WTC11 (cell line): ENCODE measurements at regions of chr20 and their contacts with region 1.

Region 1: GRCh38 chr20:57498425-57499400 is 26.2 kb downstream of the CTCFL start:
- DNase-seq: peak; percentile 54
- ATAC-seq: peak; percentile 92
- H3K4me3 Mint-ChIP-seq: peak overlapping the region; percentile 26; the same call in 1 of the 2 replicates
- H3K27ac Mint-ChIP-seq: no peak overlapping the region
- H3K4me1 Mint-ChIP-seq: peaks cover 35% of the 10 kb centered on the region
- H3K27me3 Mint-ChIP-seq: no peaks in the 10 kb centered on the region
- CTCF ChIP-seq: no peak

Region 2: DNA sequence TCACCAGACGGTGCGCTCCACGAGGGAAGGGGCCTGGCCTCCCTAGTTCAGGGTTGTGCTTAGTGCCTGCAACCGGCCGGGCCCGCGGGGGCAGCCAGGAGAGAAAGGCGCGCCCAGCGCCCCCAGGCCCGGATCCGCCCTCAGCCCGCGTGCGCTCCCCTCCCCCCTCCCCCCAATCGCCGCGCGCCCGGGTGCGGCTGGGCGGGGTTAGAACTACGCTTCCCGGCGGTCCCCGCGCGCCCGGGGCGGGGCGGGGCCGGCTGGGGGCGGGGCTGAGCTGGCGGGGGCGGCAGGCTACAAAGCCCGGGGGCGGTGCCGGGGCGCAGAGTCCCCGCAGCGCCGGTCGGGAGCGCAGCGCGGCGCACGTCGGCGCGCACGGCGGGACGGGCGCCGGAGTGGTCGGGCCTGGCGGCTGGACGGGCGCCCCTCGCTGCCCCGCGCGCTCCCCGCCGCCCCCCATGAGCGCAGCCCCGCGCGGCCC is 107.6 kb before region 1 on chr20 and contains the start of gene RBM38:
- CTCF ChIA-PET with region 1: interaction called, 16 read pairs
- POLR2A ChIA-PET with region 1: no interaction called
- DNase-seq: peak; percentile 78
- ATAC-seq: peak; percentile 63
- H3K4me3 Mint-ChIP-seq: peak within 1 kb of the TSS; percentile 84
- H3K27ac Mint-ChIP-seq: peak within 1 kb of the TSS; percentile 94
- H3K4me1 Mint-ChIP-seq: peaks cover 38% of the 10 kb centered on the region
- H3K27me3 Mint-ChIP-seq: no peaks in the 10 kb centered on the region
- CTCF ChIP-seq: no peak
- total RNA-seq, gene RBM38: 60.5 to 69.0 TPM (median 61.1 TPM) in 3 replicates

Region 3: DNA sequence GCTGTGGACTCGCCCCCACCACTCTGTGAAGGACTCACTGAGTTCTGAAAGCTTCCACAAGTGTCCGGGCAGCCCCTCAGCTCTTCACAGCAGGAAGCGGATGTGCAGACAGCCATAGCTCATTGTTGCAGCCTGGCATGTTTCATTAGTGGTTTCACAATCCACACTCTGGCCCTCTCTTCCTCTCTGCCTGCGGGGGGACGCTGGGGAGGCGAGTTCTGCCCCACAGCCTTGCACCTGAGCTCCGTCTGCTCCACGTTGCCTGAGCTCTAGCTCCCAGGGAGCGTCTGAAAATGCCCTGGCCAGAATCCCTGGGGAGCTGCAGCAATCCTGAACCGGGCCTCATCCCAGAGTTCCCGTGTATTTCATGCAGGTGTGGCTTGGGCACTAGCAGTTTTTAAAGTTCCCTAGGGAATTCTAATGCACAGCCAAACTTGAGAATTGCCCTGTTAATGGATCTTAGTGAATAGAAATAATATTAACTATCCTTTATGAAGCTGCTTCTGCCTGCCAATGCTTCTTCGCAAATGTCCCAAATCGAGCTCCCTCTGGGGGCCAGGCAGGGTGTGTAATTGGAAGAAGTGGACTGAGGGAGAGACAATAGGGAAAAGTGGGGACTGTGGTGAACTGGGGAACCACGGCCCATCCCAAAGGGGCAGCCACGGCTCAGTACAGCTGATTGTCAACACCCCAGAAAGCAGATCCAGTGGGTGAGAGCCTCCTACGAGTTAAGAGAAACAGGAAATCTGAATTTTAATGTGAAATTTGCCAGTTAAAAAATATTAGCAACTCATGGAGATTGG is 25.3 kb before region 1 on chr20:
- CTCF ChIA-PET with region 1: interaction called, 13 read pairs
- POLR2A ChIA-PET with region 1: no interaction called
- DNase-seq: peak; percentile 21
- ATAC-seq: peak; percentile 26
- H3K4me3 Mint-ChIP-seq: no peak overlapping the region
- H3K27ac Mint-ChIP-seq: no peak overlapping the region
- H3K4me1 Mint-ChIP-seq: peaks cover 42% of the 10 kb centered on the region
- H3K27me3 Mint-ChIP-seq: peaks cover 13% of the 10 kb centered on the region
- CTCF ChIP-seq: no peak

Region 4: DNA sequence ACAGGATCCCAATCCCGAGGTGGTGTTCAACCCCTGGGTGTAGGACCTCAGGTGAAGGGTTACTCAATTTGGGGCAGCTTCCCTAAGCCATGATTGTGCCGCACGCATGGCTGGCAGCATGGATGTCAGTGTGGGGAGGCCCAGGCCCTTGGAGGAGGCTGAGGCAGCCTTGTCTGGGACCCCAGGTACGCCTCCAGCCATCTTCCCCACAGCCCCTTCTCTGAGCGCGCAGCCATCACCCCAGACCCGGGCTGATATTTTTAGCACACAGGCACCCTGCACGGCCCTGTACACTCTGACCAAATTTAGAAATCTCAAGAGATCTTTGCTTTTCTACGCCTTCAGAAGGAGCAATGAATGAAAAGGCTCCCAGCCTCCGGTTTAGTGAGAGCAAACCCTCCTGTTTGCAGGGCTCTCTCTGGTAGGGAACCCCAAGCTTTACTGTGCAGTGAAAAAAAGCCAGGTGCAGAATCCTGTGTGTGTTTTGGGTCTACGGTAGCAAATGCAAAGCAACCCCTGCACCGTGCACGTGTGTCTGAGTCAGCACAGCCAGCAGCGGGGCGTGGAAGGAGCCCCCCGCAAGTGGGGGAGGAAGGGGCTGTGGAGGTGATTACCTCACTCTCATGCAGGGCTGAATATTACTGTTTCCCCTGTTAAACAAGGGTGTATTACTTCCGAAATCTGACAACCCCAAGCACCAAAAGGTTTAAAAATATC is 18.1 kb before region 1 on chr20:
- CTCF ChIA-PET with region 1: interaction called, 13 read pairs
- POLR2A ChIA-PET with region 1: no interaction called
- DNase-seq: no peak
- ATAC-seq: no peak
- H3K4me3 Mint-ChIP-seq: no peak overlapping the region
- H3K27ac Mint-ChIP-seq: no peak overlapping the region
- H3K4me1 Mint-ChIP-seq: peaks cover 44% of the 10 kb centered on the region
- H3K27me3 Mint-ChIP-seq: no peaks in the 10 kb centered on the region
- CTCF ChIP-seq: no peak

Region 5: DNA sequence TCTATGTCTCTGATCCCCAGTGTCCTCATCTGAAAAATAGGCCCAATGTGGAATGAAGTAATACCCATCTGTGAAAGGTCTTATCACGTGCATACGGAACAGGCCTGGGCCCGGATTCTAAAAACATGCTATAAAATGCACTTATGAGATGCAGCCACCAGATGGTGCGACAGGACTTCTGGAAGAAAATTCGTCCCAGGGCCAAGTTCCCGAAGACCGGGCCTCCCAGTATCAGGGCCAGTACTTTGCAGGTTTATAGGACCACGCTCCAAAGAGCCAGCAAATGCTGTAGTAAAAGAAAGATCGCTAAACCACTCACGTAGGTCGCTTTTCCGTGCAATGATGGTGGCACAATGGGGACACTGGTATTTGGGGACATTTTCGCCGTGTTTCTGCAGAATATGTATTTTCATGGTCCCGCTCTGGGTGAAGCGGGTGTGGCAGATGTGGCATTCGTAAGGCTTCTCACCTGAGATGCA is 15.6 kb after region 1 on chr20:
- CTCF ChIA-PET with region 1: interaction called, 18 read pairs
- POLR2A ChIA-PET with region 1: no interaction called
- DNase-seq: peak; percentile 71
- ATAC-seq: peak; percentile 87
- H3K4me3 Mint-ChIP-seq: no peak overlapping the region
- H3K27ac Mint-ChIP-seq: no peak overlapping the region
- H3K4me1 Mint-ChIP-seq: peaks cover 26% of the 10 kb centered on the region
- H3K27me3 Mint-ChIP-seq: no peaks in the 10 kb centered on the region
- CTCF ChIP-seq: peak; percentile 49

Region 6: GRCh38 chr20:57561356-57562279 is 62.9 kb after region 1 on chr20:
- CTCF ChIA-PET with region 1: no interaction called
- POLR2A ChIA-PET with region 1: no interaction called
- DNase-seq: no peak
- ATAC-seq: no peak
- H3K4me3 Mint-ChIP-seq: no peak overlapping the region
- H3K27ac Mint-ChIP-seq: no peak overlapping the region
- H3K4me1 Mint-ChIP-seq: no peaks in the 10 kb centered on the region
- H3K27me3 Mint-ChIP-seq: no peaks in the 10 kb centered on the region
- CTCF ChIP-seq: no peak

Region 7: GRCh38 chr20:57582432-57583305 is 84.0 kb after region 1 on chr20:
- CTCF ChIA-PET with region 1: no interaction called
- POLR2A ChIA-PET with region 1: no interaction called
- DNase-seq: peak; percentile 52
- ATAC-seq: peak; percentile 93
- H3K4me3 Mint-ChIP-seq: no peak overlapping the region
- H3K27ac Mint-ChIP-seq: no peak overlapping the region
- H3K4me1 Mint-ChIP-seq: peaks cover 20% of the 10 kb centered on the region
- H3K27me3 Mint-ChIP-seq: peaks cover 3% of the 10 kb centered on the region; the same call in 1 of the 2 replicates
- CTCF ChIP-seq: peak; percentile 36; the same call in 1 of the 2 replicates

Region 8: GRCh38 chr20:57596998-57597939 is 98.6 kb after region 1 on chr20:
- CTCF ChIA-PET with region 1: interaction called, 21 read pairs
- POLR2A ChIA-PET with region 1: no interaction called
- DNase-seq: peak; percentile 81
- ATAC-seq: peak; percentile 73
- H3K4me3 Mint-ChIP-seq: no peak overlapping the region
- H3K27ac Mint-ChIP-seq: no peak overlapping the region
- H3K4me1 Mint-ChIP-seq: peaks cover 14% of the 10 kb centered on the region
- H3K27me3 Mint-ChIP-seq: no peaks in the 10 kb centered on the region
- CTCF ChIP-seq: peak; percentile 88

Region 9: GRCh38 chr20:57622579-57623377 is 124.1 kb after region 1 on chr20:
- CTCF ChIA-PET with region 1: interaction called, 12 read pairs
- POLR2A ChIA-PET with region 1: no interaction called
- DNase-seq: peak; percentile 85
- ATAC-seq: peak; percentile 96
- H3K4me3 Mint-ChIP-seq: no peak overlapping the region
- H3K27ac Mint-ChIP-seq: no peak overlapping the region
- H3K4me1 Mint-ChIP-seq: peaks cover 9% of the 10 kb centered on the region
- H3K27me3 Mint-ChIP-seq: no peaks in the 10 kb centered on the region; the same call in 1 of the 2 replicates
- CTCF ChIP-seq: peak; percentile 93